MCF 10A (cell line): ENCODE measurements at regions of chr18 and their contacts with region 1.

Region 1: GRCh38 chr18:70931942-70932814 is 643.3 kb downstream of the SOCS6 start:
- DNase-seq: peak; percentile 47
- H3K4me3 Mint-ChIP-seq: no peak overlapping the region
- H3K27ac Mint-ChIP-seq: no peak overlapping the region
- H3K4me1 Mint-ChIP-seq: no peaks in the 10 kb centered on the region
- H3K27me3 Mint-ChIP-seq: no peaks in the 10 kb centered on the region
- CTCF ChIP-seq: peak; percentile 57

Region 2: DNA sequence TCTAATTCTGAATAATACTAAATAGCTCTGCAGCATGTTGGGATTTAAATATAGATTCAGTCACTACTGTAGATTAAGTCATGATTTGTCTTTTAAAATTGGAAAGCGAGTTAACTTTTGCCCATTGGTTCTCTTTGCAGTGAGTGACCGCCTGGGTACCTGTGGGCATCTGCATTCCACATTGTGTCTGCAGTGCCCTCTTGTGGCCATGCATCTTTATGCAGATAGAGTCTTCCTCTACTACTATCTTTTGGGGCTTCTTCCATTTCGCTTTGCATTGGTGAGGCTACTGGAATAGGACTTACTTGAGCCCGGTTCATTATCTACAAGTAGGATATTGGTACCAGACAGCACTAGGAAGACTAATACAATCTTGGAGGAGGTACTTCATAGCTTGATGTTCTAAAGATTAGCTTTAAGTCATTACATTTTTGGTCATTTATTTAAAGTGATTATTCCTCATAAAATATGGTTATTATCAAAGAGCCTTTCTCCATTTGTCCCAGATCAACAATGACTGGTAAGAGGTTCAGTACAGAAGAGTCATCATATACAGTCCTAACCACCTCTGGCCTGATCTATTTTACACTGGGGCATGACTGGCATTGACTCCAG is 440.3 kb before region 1 on chr18:
- CTCF ChIA-PET with region 1: interaction called, 5 read pairs
- POLR2A ChIA-PET with region 1: no interaction called
- intact Hi-C with region 1: loop called (anchors 5 kb)
- DNase-seq: peak; percentile 79
- H3K4me3 Mint-ChIP-seq: no peak overlapping the region
- H3K27ac Mint-ChIP-seq: no peak overlapping the region
- H3K4me1 Mint-ChIP-seq: peaks cover 8% of the 10 kb centered on the region
- H3K27me3 Mint-ChIP-seq: no peaks in the 10 kb centered on the region
- CTCF ChIP-seq: peak; percentile 81

Region 3: GRCh38 chr18:70598406-70598805 is 333.8 kb before region 1 on chr18:
- CTCF ChIA-PET with region 1: no interaction called
- POLR2A ChIA-PET with region 1: no interaction called
- intact Hi-C with region 1: loop called (anchors 5 kb)
- DNase-seq: no peak
- H3K4me3 Mint-ChIP-seq: no peak overlapping the region
- H3K27ac Mint-ChIP-seq: no peak overlapping the region
- H3K4me1 Mint-ChIP-seq: no peaks in the 10 kb centered on the region
- H3K27me3 Mint-ChIP-seq: peaks cover 23% of the 10 kb centered on the region
- CTCF ChIP-seq: no peak

Region 4: GRCh38 chr18:70627182-70627802 is 304.9 kb before region 1 on chr18:
- CTCF ChIA-PET with region 1: no interaction called
- POLR2A ChIA-PET with region 1: no interaction called
- intact Hi-C with region 1: no loop called
- DNase-seq: no peak
- H3K4me3 Mint-ChIP-seq: no peak overlapping the region
- H3K27ac Mint-ChIP-seq: no peak overlapping the region
- H3K4me1 Mint-ChIP-seq: peaks cover 1% of the 10 kb centered on the region
- H3K27me3 Mint-ChIP-seq: peaks cover 13% of the 10 kb centered on the region
- CTCF ChIP-seq: no peak

Region 5: GRCh38 chr18:70956554-70956953 is 24.4 kb after region 1 on chr18:
- CTCF ChIA-PET with region 1: no interaction called
- POLR2A ChIA-PET with region 1: no interaction called
- intact Hi-C with region 1: no loop called
- DNase-seq: no peak
- H3K4me3 Mint-ChIP-seq: no peak overlapping the region
- H3K27ac Mint-ChIP-seq: no peak overlapping the region
- H3K4me1 Mint-ChIP-seq: no peaks in the 10 kb centered on the region
- H3K27me3 Mint-ChIP-seq: no peaks in the 10 kb centered on the region
- CTCF ChIP-seq: no peak

Region 6: GRCh38 chr18:71784777-71785176 is 852.6 kb after region 1 on chr18:
- CTCF ChIA-PET with region 1: interaction called, 3 read pairs
- POLR2A ChIA-PET with region 1: no interaction called
- intact Hi-C with region 1: loop called (anchors 10 kb)
- DNase-seq: peak; percentile 34
- H3K4me3 Mint-ChIP-seq: no peak overlapping the region
- H3K27ac Mint-ChIP-seq: no peak overlapping the region
- H3K4me1 Mint-ChIP-seq: no peaks in the 10 kb centered on the region
- H3K27me3 Mint-ChIP-seq: no peaks in the 10 kb centered on the region
- CTCF ChIP-seq: peak; percentile 49

Region 7: DNA sequence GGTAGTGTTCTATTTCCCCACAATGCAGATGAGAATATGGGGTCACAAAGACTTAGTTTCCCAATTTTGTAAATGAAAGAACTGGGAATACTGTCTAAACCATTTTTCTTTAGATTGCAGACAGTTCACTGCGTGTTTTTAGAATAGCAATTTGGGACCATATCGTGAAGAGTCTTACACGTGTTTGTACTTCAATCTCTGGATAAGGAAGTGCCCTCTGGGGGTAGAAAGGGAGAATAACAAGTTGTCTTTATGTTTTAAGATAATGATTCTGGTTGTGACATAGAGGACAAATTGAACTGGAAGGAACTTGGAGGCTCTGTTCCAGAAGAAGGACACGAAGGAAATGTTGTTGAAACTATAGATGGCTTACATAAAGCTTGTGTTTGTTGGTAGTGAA is 1154.2 kb after region 1 on chr18:
- CTCF ChIA-PET with region 1: interaction called, 8 read pairs
- POLR2A ChIA-PET with region 1: no interaction called
- intact Hi-C with region 1: loop called (anchors 5 kb)
- DNase-seq: peak; percentile 52
- H3K4me3 Mint-ChIP-seq: no peak overlapping the region
- H3K27ac Mint-ChIP-seq: no peak overlapping the region
- H3K4me1 Mint-ChIP-seq: no peaks in the 10 kb centered on the region
- H3K27me3 Mint-ChIP-seq: no peaks in the 10 kb centered on the region
- CTCF ChIP-seq: peak; percentile 34

Region 8: GRCh38 chr18:72544092-72544886 is 1612.1 kb after region 1 on chr18 and contains the start of gene CBLN2:
- CTCF ChIA-PET with region 1: interaction called, 4 read pairs
- POLR2A ChIA-PET with region 1: no interaction called
- intact Hi-C with region 1: loop called (anchors 2 kb)
- DNase-seq: peak; percentile 66
- H3K4me3 Mint-ChIP-seq: peak within 1 kb of the TSS; percentile 71
- H3K27ac Mint-ChIP-seq: no peak within 1 kb of the TSS
- H3K4me1 Mint-ChIP-seq: no peaks in the 10 kb centered on the region
- H3K27me3 Mint-ChIP-seq: peaks cover 71% of the 10 kb centered on the region
- CTCF ChIP-seq: peak; percentile 90
- total RNA-seq, gene CBLN2: not detected in 2 replicates

Region 9: DNA sequence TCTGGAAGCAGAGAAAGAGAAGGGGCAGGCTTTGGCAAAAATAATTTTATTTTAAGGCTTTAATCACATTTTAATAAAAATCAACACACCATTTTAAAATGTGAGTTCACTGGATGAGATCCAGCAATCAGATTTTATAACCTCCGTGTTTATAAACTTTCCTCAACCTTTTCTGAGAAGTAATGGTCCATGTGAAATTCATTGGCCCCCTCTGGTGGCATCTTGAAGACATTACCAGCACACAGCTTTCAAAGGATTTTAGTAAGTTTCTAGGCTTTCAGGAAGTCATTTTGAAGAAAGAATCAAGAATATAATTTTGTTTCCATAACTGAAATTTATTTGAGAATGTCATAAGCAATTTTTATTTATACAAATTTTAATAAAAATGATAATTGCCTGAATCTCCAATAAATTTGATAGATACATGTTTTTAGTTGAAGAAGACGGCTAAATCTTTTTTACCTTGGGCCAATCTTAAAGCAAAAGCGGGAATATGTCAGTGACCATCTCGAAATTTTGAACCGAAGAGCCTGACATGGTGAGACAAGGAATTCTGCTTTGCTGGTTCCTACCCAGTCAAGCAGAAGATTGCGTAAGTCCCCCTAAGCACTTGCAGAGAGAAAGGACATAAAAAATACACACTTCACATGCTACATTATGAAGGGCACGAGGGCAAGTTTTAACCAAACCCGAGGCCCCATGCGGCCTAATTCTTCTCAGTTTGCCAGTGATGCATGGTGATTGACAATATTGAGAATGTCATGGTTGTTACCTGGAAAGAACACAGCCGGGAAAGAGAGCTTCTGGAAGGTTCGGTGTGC is 1740.4 kb after region 1 on chr18:
- CTCF ChIA-PET with region 1: no interaction called
- POLR2A ChIA-PET with region 1: no interaction called
- intact Hi-C with region 1: loop called (anchors 1 kb)
- DNase-seq: peak; percentile 56
- H3K4me3 Mint-ChIP-seq: no peak overlapping the region
- H3K27ac Mint-ChIP-seq: no peak overlapping the region
- H3K4me1 Mint-ChIP-seq: no peaks in the 10 kb centered on the region
- H3K27me3 Mint-ChIP-seq: no peaks in the 10 kb centered on the region
- CTCF ChIP-seq: peak; percentile 65